ENCODE measurements at regions of chr10 and their contacts with region 1.

Region 1: GRCh38 chr10:63711867-63712716 is 190.9 kb downstream of the REEP3 start:
- DNase-seq: peak; percentile 99
- H3K4me3 ChIP-seq: no peak overlapping the region
- H3K27ac ChIP-seq: peak overlapping the region; percentile 71 to 81
- H3K4me1 ChIP-seq: peaks cover 18% of the 10 kb centered on the region
- H3K27me3 ChIP-seq: no peaks in the 10 kb centered on the region
- CTCF ChIP-seq: no peak
- POLR2A ChIP-seq: no peak

Region 2: GRCh38 chr10:62804356-62805230 is 907.5 kb before region 1 on chr10 and contains the start of gene ADO:
- intact Hi-C with region 1: loop called (anchors 10 kb)
- DNase-seq: peak; percentile 70
- H3K4me3 ChIP-seq: peak within 1 kb of the TSS; percentile 74 to 79
- H3K27ac ChIP-seq: peak within 1 kb of the TSS; percentile 89 to 94
- H3K4me1 ChIP-seq: peaks cover 3% of the 10 kb centered on the region
- H3K27me3 ChIP-seq: no peaks in the 10 kb centered on the region
- CTCF ChIP-seq: peak in 1 of 4 experiments; percentile 10
- POLR2A ChIP-seq: no peak
- total RNA-seq, gene ADO: 25.0 to 37.4 TPM

Region 3: DNA sequence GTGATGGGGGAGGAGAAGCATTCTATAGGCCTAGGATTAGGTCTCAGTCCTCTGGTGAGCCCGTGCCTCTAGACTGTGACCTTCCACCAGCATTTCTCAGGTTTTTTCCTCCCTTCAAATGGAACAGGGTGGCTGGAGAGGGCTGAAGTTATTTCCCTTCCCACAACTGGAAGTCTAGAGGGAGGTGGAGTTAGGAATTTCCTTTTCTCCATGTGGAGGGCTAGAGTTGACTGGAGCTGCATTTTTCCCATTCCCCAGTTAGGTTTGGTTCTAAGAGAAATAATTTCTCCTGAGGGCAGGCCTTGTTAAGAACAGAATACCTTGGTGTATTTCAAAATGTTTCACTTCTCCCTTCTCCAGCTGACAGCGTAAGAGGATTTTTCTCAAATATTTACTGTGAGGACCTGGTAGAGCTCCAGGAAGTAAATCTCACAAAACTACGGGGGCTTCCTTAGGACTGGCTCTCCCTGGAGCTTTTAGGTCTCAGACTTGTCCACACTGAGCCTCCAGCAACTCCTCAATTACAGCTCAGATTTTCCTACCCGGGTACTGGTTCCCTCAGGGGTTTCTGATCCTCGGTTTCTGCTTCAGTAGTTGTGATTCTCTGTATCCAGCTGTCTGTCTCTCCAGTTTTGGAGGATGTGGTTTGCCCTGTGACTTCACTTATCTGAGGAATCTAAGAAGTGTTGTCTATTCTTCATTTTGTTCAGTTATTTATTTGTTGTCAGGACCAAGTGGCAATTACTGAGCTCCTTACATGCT is 196.9 kb before region 1 on chr10:
- intact Hi-C with region 1: loop called (anchors 10 kb)
- DNase-seq: no peak
- H3K4me3 ChIP-seq: no peak overlapping the region
- H3K27ac ChIP-seq: peak overlapping the region; percentile 48 to 57
- H3K4me1 ChIP-seq: peaks cover 7% of the 10 kb centered on the region
- H3K27me3 ChIP-seq: no peaks in the 10 kb centered on the region
- CTCF ChIP-seq: no peak
- POLR2A ChIP-seq: no peak

Region 4: DNA sequence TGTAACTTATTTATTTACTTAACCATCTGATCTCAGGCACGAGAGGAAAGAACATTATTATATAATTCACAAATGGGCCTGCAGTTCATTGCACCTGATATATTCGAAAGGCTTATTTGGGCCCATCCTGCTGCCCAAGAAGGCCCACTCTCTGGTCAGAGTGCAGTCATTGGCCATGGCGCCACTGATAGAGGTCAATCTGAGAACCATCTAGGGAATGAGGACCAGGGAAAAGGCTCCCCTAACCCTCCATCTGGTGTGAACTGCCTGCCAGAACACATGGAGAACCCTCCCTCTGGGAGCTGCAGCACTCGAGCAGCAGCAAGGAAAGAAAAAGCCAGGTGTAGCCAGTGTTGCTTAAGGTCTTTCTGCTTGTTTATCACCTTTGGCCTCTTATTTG is 54.3 kb before region 1 on chr10:
- intact Hi-C with region 1: no loop called
- DNase-seq: no peak
- H3K4me3 ChIP-seq: no peak overlapping the region
- H3K27ac ChIP-seq: no peak overlapping the region
- H3K4me1 ChIP-seq: no peaks in the 10 kb centered on the region
- H3K27me3 ChIP-seq: no peaks in the 10 kb centered on the region
- CTCF ChIP-seq: no peak
- POLR2A ChIP-seq: no peak

Region 5: DNA sequence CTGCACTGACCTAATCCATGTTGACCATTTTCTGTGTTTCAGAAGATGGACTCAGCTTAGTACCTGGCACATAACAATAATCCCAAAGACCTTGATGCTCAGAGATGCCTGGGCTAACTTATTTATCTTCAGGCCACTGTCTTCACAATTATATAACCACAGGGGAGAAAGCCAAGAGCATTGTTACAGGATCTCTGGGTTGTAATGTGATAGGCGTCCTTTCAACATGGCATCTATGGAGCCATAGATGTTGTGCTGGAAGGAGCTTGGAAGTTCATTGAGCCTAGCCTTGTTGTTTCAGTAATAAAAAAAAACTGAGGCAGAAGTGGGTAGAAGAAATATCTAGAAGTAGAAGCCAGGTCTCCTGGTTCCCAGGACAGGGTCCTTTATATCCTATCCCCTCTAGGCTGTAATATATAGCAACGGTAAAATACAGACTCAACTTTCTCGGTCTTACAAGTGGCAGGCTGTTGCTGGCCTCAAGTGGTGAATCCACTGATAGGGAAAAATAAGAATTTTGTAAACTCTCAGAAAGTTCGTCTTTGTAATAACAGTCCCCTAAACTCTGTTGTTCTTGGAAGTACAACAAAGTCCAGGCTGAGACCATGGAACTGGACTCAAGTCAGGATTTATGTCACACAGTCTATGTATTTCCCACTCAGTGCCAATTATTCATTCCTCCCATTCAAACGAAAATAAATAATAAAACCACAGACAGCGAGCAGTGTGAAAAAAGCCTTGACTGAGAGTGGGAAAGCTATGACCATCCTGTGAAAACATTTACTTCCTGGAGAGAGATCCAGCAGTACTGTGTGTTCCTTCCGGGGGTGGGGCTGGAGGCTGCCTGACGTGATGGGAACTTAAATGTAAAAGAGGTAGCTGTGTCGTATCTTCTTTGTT is 86.8 kb after region 1 on chr10:
- intact Hi-C with region 1: no loop called
- DNase-seq: peak; percentile 87
- H3K4me3 ChIP-seq: no peak overlapping the region
- H3K27ac ChIP-seq: peak overlapping the region; percentile 54 to 74
- H3K4me1 ChIP-seq: no peaks in the 10 kb centered on the region
- H3K27me3 ChIP-seq: no peaks in the 10 kb centered on the region
- CTCF ChIP-seq: no peak
- POLR2A ChIP-seq: no peak